CD4-positive, alpha-beta T cell (primary cell): ENCODE measurements at regions of chr3 and their contacts with region 1.

Region 1: DNA sequence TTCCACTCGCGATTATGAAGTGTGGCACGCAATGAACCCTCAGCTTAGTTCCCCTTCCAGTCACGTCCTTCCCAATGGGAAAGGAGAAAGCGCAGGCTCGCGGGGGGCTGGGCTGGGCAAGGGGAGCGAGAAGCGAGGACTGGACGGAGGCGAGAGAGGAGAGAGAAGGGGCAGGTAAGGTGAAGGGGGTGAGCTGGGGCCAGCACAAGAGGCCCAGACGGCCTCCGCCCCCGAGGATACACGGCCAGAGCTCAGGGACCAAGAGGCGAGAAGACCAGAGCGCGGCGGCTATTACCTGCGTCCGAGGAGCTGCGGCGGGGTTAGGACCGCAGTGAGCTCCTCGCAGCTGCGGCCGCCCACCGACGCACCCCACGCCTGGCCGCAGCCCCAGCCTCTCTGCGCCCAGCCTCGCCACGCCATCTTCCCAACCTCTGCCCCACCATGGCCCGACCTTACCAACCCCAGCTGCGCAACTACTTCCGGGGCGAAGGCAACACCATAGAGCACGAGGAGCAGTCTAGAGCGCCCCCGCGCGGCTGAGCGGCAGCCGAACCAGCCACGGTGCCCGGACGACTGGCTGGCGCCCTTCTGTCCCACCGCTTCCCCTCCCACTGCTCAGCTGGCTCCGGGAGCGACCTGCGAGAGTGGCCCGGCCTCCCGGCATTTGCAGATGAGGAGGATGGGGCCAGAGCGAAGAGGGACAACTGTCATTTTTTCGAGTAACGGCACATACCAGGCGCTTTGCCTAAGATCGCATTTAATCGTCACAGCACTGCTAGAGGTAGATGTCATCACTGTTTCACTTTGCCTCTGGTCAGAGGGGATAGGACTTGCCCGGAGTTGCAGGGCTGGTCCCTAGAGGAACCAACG is at the start of gene PARL:
- DNase-seq: peak; percentile 93 to 98 (median 96)
- ATAC-seq: peak; percentile 100
- H3K4me3 ChIP-seq: peak within 1 kb of the TSS; percentile 97
- H3K4me3 Mint-ChIP-seq: peak within 1 kb of the TSS; percentile 97
- H3K27ac ChIP-seq: peak within 1 kb of the TSS; percentile 66
- H3K27ac Mint-ChIP-seq: peak within 1 kb of the TSS; percentile 82
- H3K4me1 ChIP-seq: peaks cover 37% of the 10 kb centered on the region
- H3K4me1 Mint-ChIP-seq: peaks cover 36% of the 10 kb centered on the region
- H3K27me3 ChIP-seq: no peaks in the 10 kb centered on the region
- H3K27me3 Mint-ChIP-seq: no peaks in the 10 kb centered on the region
- CTCF ChIP-seq: peak; percentile 91
- total RNA-seq, gene PARL: 36.9 to 40.0 TPM

Region 2: GRCh38 chr3:183825456-183826161 is 59.1 kb before region 1 on chr3 and contains the start of gene MAP6D1:
- CTCF ChIA-PET with region 1: interaction called, 10 read pairs
- POLR2A ChIA-PET with region 1: interaction called, 5 read pairs
- intact Hi-C with region 1: no loop called
- DNase-seq: peak in 9 of 14 experiments; percentile 13 to 61 (median 41)
- ATAC-seq: peak; percentile 75
- H3K4me3 ChIP-seq: peak within 1 kb of the TSS; percentile 51
- H3K4me3 Mint-ChIP-seq: peak within 1 kb of the TSS; percentile 85
- H3K27ac ChIP-seq: no peak within 1 kb of the TSS
- H3K27ac Mint-ChIP-seq: peak within 1 kb of the TSS; percentile 39
- H3K4me1 ChIP-seq: peaks cover 12% of the 10 kb centered on the region
- H3K4me1 Mint-ChIP-seq: peaks cover 20% of the 10 kb centered on the region
- H3K27me3 ChIP-seq: peaks cover 0 to 2% of the 10 kb centered on the region in 2 experiments
- H3K27me3 Mint-ChIP-seq: no peaks in the 10 kb centered on the region
- CTCF ChIP-seq: no peak
- total RNA-seq, gene MAP6D1: 1.1 to 1.6 TPM

Region 3: GRCh38 chr3:184017672-184018423 is 133.2 kb after region 1 on chr3 and contains the start of gene ABCC5:
- CTCF ChIA-PET with region 1: interaction called, 7 read pairs
- POLR2A ChIA-PET with region 1: no interaction called
- intact Hi-C with region 1: loop called in 1 of 2 experiments (anchors 2 kb)
- DNase-seq: peak; percentile 65 to 92 (median 78)
- ATAC-seq: peak; percentile 94
- H3K4me3 ChIP-seq: peak within 1 kb of the TSS; percentile 96
- H3K4me3 Mint-ChIP-seq: peak within 1 kb of the TSS; percentile 100
- H3K27ac ChIP-seq: peak within 1 kb of the TSS; percentile 23 to 43
- H3K27ac Mint-ChIP-seq: peak within 1 kb of the TSS; percentile 66
- H3K4me1 ChIP-seq: peaks cover 16% of the 10 kb centered on the region
- H3K4me1 Mint-ChIP-seq: peaks cover 26% of the 10 kb centered on the region
- H3K27me3 ChIP-seq: peaks cover 0 to 3% of the 10 kb centered on the region in 2 experiments
- H3K27me3 Mint-ChIP-seq: peaks cover 5% of the 10 kb centered on the region
- CTCF ChIP-seq: peak; percentile 89
- total RNA-seq, gene ABCC5: 10.8 to 11.4 TPM

Region 4: GRCh38 chr3:184174646-184175492 is 290.2 kb after region 1 on chr3 and contains the start of gene AP2M1:
- CTCF ChIA-PET with region 1: interaction called, 4 read pairs
- POLR2A ChIA-PET with region 1: no interaction called
- intact Hi-C with region 1: loop called in 1 of 2 experiments (anchors 5 kb)
- DNase-seq: peak; percentile 94 to 99 (median 97)
- ATAC-seq: peak; percentile 98
- H3K4me3 ChIP-seq: peak within 1 kb of the TSS; percentile 87
- H3K4me3 Mint-ChIP-seq: peak within 1 kb of the TSS; percentile 96
- H3K27ac ChIP-seq: peak within 1 kb of the TSS in 1 of 2 donors; percentile 79
- H3K27ac Mint-ChIP-seq: peak within 1 kb of the TSS; percentile 86
- H3K4me1 ChIP-seq: peaks cover 35% of the 10 kb centered on the region
- H3K4me1 Mint-ChIP-seq: peaks cover 42% of the 10 kb centered on the region
- H3K27me3 ChIP-seq: no peaks in the 10 kb centered on the region
- H3K27me3 Mint-ChIP-seq: no peaks in the 10 kb centered on the region
- CTCF ChIP-seq: no peak
- total RNA-seq, gene AP2M1: 123 to 136 TPM